IMR-90 (cell line): ENCODE measurements at regions of chr3 and their contacts with region 1.

Region 1: GRCh38 chr3:24963762-24964625 is 464.1 kb upstream of the RARB start:
- DNase-seq: peak; percentile 17
- ATAC-seq: no peak
- H3K4me3 ChIP-seq: no peak overlapping the region
- H3K27ac ChIP-seq: no peak overlapping the region
- H3K4me1 ChIP-seq: no peaks in the 10 kb centered on the region
- H3K27me3 ChIP-seq: no peaks in the 10 kb centered on the region
- CTCF ChIP-seq: peak; percentile 25; the same call in 1 of the 2 replicates
- POLR2A ChIP-seq: no peak
- RAD21 ChIP-seq: no peak

Region 2: GRCh38 chr3:25151281-25151902 is 187.4 kb after region 1 on chr3:
- CTCF ChIA-PET with region 1: no interaction called
- POLR2A ChIA-PET with region 1: no interaction called
- dilution Hi-C with region 1: no loop called
- in situ Hi-C with region 1: no loop called
- intact Hi-C with region 1: no loop called
- DNase-seq: no peak
- ATAC-seq: no peak
- H3K4me3 ChIP-seq: no peak overlapping the region
- H3K27ac ChIP-seq: no peak overlapping the region
- H3K4me1 ChIP-seq: no peaks in the 10 kb centered on the region
- H3K27me3 ChIP-seq: no peaks in the 10 kb centered on the region
- CTCF ChIP-seq: no peak
- POLR2A ChIP-seq: no peak
- RAD21 ChIP-seq: no peak

Region 3: DNA sequence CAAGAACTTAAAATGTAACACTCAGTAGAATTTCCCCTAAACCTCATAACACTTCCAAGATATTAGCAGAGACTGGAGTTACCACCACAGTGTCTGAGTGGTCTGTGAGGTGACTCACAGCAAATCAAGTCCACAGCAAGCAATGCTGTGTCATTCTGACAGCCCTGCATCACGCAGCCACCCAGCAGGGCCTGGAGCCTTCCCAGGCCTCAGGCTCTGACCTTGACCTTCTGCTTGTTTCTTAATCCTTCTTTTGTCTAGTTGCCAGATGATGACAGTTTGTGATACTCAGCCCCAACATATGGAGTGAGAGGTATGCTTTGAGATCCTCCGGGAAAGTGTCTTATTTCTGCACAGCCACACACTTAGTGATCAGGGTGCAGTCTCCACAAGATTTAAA is 618.2 kb after region 1 on chr3:
- CTCF ChIA-PET with region 1: no interaction called
- POLR2A ChIA-PET with region 1: no interaction called
- dilution Hi-C with region 1: no loop called
- in situ Hi-C with region 1: loop called (anchors 10 kb)
- intact Hi-C with region 1: no loop called
- DNase-seq: peak; percentile 96
- ATAC-seq: peak; percentile 91
- H3K4me3 ChIP-seq: no peak overlapping the region
- H3K27ac ChIP-seq: no peak overlapping the region
- H3K4me1 ChIP-seq: peaks cover 6% of the 10 kb centered on the region; the same call in 1 of the 2 replicates
- H3K27me3 ChIP-seq: no peaks in the 10 kb centered on the region
- CTCF ChIP-seq: no peak
- POLR2A ChIP-seq: no peak
- RAD21 ChIP-seq: no peak